CD8-positive, alpha-beta T cell (primary cell): ENCODE measurements at regions of chr13 and their contacts with region 1.

Region 1: DNA sequence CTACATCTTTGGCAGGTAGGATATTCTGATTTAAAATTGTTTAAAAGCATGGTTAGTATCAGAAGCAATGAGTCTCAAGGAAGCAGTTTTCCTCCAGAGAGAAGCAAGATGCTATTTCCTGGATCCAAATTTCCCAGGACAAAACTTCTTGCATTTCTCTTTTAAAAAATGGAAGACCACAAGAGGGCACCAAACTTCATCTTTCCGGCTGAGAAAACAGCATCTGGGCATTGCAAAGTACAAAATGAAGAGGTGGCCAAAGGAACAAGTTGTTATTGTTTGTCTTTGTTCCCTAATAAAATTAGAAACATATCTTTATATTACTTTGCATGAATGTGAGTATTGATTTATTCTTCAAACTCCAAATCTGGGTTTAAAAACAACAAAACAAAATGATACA is 60.0 kb upstream of the LRCH1 start:
- DNase-seq: peak in 3 of 9 experiments; percentile 8 to 53 (median 42)
- ATAC-seq: no peak
- H3K4me3 ChIP-seq: no peak overlapping the region
- H3K4me3 Mint-ChIP-seq: no peak overlapping the region
- H3K27ac ChIP-seq: no peak overlapping the region
- H3K27ac Mint-ChIP-seq: no peak overlapping the region
- H3K4me1 ChIP-seq: no peaks in the 10 kb centered on the region
- H3K4me1 Mint-ChIP-seq: no peaks in the 10 kb centered on the region
- H3K27me3 ChIP-seq: no peaks in the 10 kb centered on the region
- H3K27me3 Mint-ChIP-seq: peaks cover 3% of the 10 kb centered on the region
- CTCF ChIP-seq: peak; percentile 79

Region 2: DNA sequence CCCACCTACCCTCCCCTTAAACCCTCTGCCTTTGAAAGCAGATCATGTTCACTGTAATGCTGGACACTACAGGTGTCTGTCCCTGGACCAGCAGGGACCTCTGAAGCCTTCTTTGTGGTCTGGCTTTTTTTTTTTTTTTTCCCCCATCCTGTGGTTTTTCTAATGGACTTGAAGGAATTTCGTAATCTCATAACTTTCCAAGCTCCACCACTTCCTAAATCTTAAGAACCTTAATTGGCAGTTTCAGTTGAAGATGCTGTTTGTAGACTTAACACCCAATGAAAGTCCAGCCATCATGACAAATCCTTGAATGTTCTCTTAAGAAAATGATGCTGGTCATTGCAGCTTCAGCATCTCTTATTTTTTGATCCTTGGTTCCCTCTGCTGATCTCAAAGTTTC is 15.0 kb after region 1 on chr13:
- CTCF ChIA-PET with region 1: no interaction called
- POLR2A ChIA-PET with region 1: no interaction called
- intact Hi-C with region 1: no loop called
- DNase-seq: no peak
- ATAC-seq: no peak
- H3K4me3 ChIP-seq: no peak overlapping the region
- H3K4me3 Mint-ChIP-seq: no peak overlapping the region
- H3K27ac ChIP-seq: no peak overlapping the region
- H3K27ac Mint-ChIP-seq: no peak overlapping the region
- H3K4me1 ChIP-seq: no peaks in the 10 kb centered on the region
- H3K4me1 Mint-ChIP-seq: no peaks in the 10 kb centered on the region
- H3K27me3 ChIP-seq: no peaks in the 10 kb centered on the region
- H3K27me3 Mint-ChIP-seq: peaks cover 5% of the 10 kb centered on the region
- CTCF ChIP-seq: no peak

Region 3: DNA sequence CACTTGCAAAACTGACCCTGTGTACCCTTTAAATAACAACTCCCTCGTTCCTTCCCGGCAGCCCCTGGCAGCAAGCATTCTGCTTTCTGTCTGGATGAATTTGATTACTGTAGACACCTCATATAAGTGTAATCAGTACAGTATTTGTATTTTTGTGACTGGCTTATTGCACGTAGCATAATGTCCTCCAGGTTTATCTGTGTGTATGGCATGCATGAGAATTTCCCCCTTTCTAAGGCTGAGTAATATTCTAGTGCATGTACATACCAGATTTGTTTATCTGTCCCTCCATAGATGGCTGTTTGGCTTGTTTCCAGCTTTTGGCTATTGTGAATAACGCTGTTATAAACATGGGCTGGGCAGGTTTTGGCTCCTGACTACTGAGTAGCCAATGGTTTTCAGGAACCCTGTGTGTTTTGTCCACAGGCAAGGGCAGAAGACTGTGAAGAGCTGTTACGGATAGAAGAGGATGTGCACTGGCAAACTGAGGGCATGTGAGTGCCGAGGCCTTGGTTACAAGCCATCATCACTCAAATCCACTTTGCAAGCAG is 206.0 kb after region 1 on chr13:
- CTCF ChIA-PET with region 1: no interaction called
- POLR2A ChIA-PET with region 1: no interaction called
- intact Hi-C with region 1: no loop called
- DNase-seq: no peak
- ATAC-seq: no peak
- H3K4me3 ChIP-seq: no peak overlapping the region
- H3K4me3 Mint-ChIP-seq: no peak overlapping the region
- H3K27ac ChIP-seq: no peak overlapping the region
- H3K27ac Mint-ChIP-seq: no peak overlapping the region
- H3K4me1 ChIP-seq: no peaks in the 10 kb centered on the region
- H3K4me1 Mint-ChIP-seq: no peaks in the 10 kb centered on the region
- H3K27me3 ChIP-seq: no peaks in the 10 kb centered on the region
- H3K27me3 Mint-ChIP-seq: no peaks in the 10 kb centered on the region
- CTCF ChIP-seq: no peak

Region 4: GRCh38 chr13:46721054-46721453 is 228.1 kb after region 1 on chr13:
- CTCF ChIA-PET with region 1: interaction called, 25 read pairs
- POLR2A ChIA-PET with region 1: no interaction called
- intact Hi-C with region 1: loop called in 1 of 2 experiments (anchors 1 kb)
- DNase-seq: peak in 8 of 9 experiments; percentile 1 to 67 (median 50)
- ATAC-seq: peak; percentile 38
- H3K4me3 ChIP-seq: no peak overlapping the region
- H3K4me3 Mint-ChIP-seq: no peak overlapping the region
- H3K27ac ChIP-seq: no peak overlapping the region
- H3K27ac Mint-ChIP-seq: no peak overlapping the region
- H3K4me1 ChIP-seq: no peaks in the 10 kb centered on the region
- H3K4me1 Mint-ChIP-seq: no peaks in the 10 kb centered on the region
- H3K27me3 ChIP-seq: no peaks in the 10 kb centered on the region
- H3K27me3 Mint-ChIP-seq: no peaks in the 10 kb centered on the region
- CTCF ChIP-seq: peak; percentile 92